A549 (cell line): ENCODE measurements at regions of chr11 and their contacts with region 1.

Region 1: GRCh38 chr11:34366522-34366921 is 8.7 kb upstream of the ABTB2 start:
- DNase-seq: peak in 1 of 2 experiments; percentile 79
- ATAC-seq: 0 out of 6 replicates have a peak, but pooled peaks of 1 of the 2 experiments have one; percentile 31
- H3K4me3 ChIP-seq: no peak overlapping the region
- H3K27ac ChIP-seq: peak overlapping the region in 1 of 2 experiments; percentile 49; a peak in 1 of 6 replicates
- H3K4me1 ChIP-seq: peaks cover 9% of the 10 kb centered on the region; the same call in 2 of the 3 replicates
- CTCF ChIP-seq: peak; percentile 72
- EP300 ChIP-seq: no peak
- POLR2A ChIP-seq: no peak
- RAD21 ChIP-seq: peak; percentile 78 to 79

Region 2: GRCh38 chr11:34185926-34186841 is 180.3 kb before region 1 on chr11:
- CTCF ChIA-PET with region 1: interaction called, 13 read pairs
- POLR2A ChIA-PET with region 1: no interaction called
- DNase-seq: no peak
- ATAC-seq: no peak
- H3K4me3 ChIP-seq: no peak overlapping the region
- H3K27ac ChIP-seq: no peak overlapping the region
- H3K4me1 ChIP-seq: peaks cover 5% of the 10 kb centered on the region; the same call in 2 of the 3 replicates
- CTCF ChIP-seq: no peak
- EP300 ChIP-seq: no peak
- POLR2A ChIP-seq: no peak
- RAD21 ChIP-seq: no peak

Region 3: GRCh38 chr11:34458525-34458924 is 92.0 kb after region 1 on chr11:
- CTCF ChIA-PET with region 1: interaction called, 13 read pairs
- POLR2A ChIA-PET with region 1: no interaction called
- DNase-seq: no peak
- ATAC-seq: no peak
- H3K4me3 ChIP-seq: no peak overlapping the region
- H3K27ac ChIP-seq: no peak overlapping the region
- H3K4me1 ChIP-seq: no peaks in the 10 kb centered on the region
- CTCF ChIP-seq: no peak
- EP300 ChIP-seq: no peak
- POLR2A ChIP-seq: no peak
- RAD21 ChIP-seq: no peak

Region 4: GRCh38 chr11:34480314-34480713 is 113.8 kb after region 1 on chr11:
- CTCF ChIA-PET with region 1: interaction called, 12 read pairs
- POLR2A ChIA-PET with region 1: no interaction called
- DNase-seq: no peak
- ATAC-seq: no peak
- H3K4me3 ChIP-seq: no peak overlapping the region
- H3K27ac ChIP-seq: no peak overlapping the region
- H3K4me1 ChIP-seq: no peaks in the 10 kb centered on the region
- CTCF ChIP-seq: no peak
- EP300 ChIP-seq: no peak
- POLR2A ChIP-seq: no peak
- RAD21 ChIP-seq: no peak

Region 5: DNA sequence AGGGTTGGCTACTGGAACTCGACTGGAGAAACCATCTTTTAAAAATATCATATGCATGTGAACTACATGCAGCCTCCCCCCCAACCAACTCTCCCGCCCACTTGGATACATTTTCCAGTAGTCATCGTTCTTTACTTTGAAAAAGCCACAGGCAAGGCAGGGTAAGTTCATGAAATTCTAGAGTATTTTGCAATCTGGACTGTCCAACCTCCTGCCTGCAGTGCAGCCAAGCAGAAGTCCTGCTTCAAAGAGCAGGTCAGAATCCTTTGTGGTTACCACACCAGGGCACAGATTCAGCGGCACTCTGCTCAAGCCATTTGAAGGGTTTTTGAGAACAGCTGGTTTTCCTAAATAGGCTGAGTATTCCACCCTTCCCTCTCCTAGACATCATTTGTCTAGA is 135.0 kb after region 1 on chr11:
- CTCF ChIA-PET with region 1: interaction called, 257 read pairs
- POLR2A ChIA-PET with region 1: no interaction called
- DNase-seq: peak in 1 of 2 experiments; percentile 46
- ATAC-seq: peak; percentile 63 to 71; a peak in 5 of 6 replicates
- H3K4me3 ChIP-seq: no peak overlapping the region
- H3K27ac ChIP-seq: peak overlapping the region; percentile 64 to 80
- H3K4me1 ChIP-seq: peaks cover 19% of the 10 kb centered on the region
- CTCF ChIP-seq: no peak
- EP300 ChIP-seq: 0 out of 5 replicates have a peak, but pooled peaks of 1 of the 2 experiments have one; percentile 25
- POLR2A ChIP-seq: no peak
- RAD21 ChIP-seq: no peak